Mammary epithelial cell (primary cell): ENCODE measurements at regions of chr14 and their contacts with region 1.

Region 1: DNA sequence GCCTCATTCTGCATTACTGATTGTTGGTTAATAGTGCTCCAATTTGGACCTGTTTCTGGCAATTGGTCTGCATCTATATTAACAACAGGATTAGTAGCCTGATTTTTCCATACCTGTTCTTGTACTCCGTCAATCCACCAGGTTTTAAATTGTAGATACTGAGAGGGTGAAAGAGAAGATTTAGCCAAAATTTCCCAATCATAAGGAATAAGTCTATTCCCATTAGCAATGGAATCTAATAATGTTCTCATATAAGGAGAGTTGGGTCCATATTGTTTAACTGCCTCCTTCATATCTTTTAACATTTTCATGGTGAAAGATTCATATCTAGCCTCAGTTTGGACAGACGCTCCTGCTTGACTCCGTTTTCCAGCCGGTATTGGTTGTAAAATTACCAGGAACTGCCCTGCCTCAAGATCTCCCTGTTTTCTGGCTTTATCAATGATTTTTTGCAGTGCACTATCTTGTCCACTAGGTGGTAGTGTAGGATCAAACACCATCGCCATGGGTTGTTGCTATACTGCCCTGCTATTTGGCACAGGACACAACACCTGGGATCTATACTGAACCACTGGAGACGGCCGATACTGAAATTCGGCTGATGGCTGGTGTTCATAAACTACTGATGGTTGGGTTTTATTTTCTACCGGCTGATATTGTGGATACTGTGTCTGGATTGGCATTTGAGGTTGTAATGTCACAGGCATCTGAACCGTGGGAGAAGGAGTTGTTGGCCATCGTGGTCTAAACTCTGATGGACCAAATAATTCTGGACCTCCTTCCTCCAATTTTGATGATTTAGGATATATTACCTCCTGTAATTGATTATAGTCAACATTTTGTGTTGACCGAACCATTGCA is 25.2 kb downstream of the DHRS4L2 start:
- DNase-seq: peak; percentile 65
- H3K4me3 ChIP-seq: no peak overlapping the region
- H3K27ac ChIP-seq: no peak overlapping the region
- H3K4me1 ChIP-seq: no peaks in the 10 kb centered on the region
- H3K27me3 ChIP-seq: no peaks in the 10 kb centered on the region
- CTCF ChIP-seq: peak; percentile 86 to 90

Region 2: DNA sequence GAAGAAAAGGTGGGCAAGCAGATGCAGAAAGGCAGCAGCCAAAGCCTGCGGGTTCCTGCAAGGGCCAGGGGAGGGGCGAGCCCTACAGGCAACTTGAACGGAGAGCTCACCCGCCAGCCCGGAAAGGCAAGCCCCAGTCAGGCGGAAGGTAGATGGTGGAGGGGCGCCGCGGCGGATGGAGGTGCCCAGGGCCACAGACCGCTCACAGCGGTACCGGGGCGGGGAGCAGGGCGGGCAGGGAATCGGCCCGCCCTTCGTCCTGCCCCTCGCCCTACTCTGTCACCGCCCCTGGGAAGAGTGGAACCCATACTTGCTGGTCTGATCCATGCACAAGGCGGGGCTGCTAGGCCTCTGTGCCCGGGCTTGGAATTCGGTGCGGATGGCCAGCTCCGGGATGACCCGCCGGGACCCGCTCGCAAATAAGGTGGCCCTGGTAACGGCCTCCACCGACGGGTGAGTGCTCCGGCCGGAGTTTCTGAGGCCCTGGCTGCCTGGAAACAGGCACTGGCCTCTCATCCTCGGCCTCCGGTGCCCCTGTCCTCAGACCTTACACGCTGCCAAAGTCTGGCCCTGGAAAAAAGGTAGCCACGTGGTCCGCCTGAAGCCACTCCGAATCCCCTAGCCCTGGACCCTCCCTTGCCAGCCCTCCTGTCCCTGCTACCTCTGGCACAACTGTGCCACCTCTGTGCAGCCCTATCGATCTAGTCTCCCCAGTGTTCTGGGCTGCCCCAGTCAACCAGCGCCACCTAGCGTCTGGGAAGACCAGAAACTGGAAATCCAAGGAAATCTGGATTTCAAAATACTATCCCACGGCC is 60.2 kb before region 1 on chr14 and contains the start of gene DHRS4:
- CTCF ChIA-PET with region 1: no interaction called
- dilution Hi-C with region 1: no loop called
- in situ Hi-C with region 1: no loop called
- intact Hi-C with region 1: loop called (anchors 10 kb)
- DNase-seq: peak; percentile 86
- H3K4me3 ChIP-seq: peak within 1 kb of the TSS; percentile 54 to 82 (median 68)
- H3K27ac ChIP-seq: peak within 1 kb of the TSS; percentile 52
- H3K4me1 ChIP-seq: no peaks in the 10 kb centered on the region
- H3K27me3 ChIP-seq: no peaks in the 10 kb centered on the region
- CTCF ChIP-seq: peak; percentile 75 to 93
- total RNA-seq, gene DHRS4: 25.0 to 30.9 TPM

Region 3: GRCh38 chr14:24036169-24036962 is 22.5 kb after region 1 on chr14:
- CTCF ChIA-PET with region 1: no interaction called
- dilution Hi-C with region 1: no loop called
- in situ Hi-C with region 1: no loop called
- intact Hi-C with region 1: loop called (anchors 1 kb)
- DNase-seq: peak; percentile 70
- H3K4me3 ChIP-seq: peak overlapping the region; percentile 64
- H3K27ac ChIP-seq: peak overlapping the region; percentile 34
- H3K4me1 ChIP-seq: no peaks in the 10 kb centered on the region
- H3K27me3 ChIP-seq: no peaks in the 10 kb centered on the region
- CTCF ChIP-seq: peak; percentile 68 to 86

Region 4: GRCh38 chr14:24058260-24058950 is 44.5 kb after region 1 on chr14:
- CTCF ChIA-PET with region 1: no interaction called
- dilution Hi-C with region 1: no loop called
- in situ Hi-C with region 1: no loop called
- intact Hi-C with region 1: loop called (anchors 1 kb)
- DNase-seq: peak; percentile 50
- H3K4me3 ChIP-seq: no peak overlapping the region
- H3K27ac ChIP-seq: no peak overlapping the region
- H3K4me1 ChIP-seq: no peaks in the 10 kb centered on the region
- H3K27me3 ChIP-seq: peaks cover 7% of the 10 kb centered on the region
- CTCF ChIP-seq: peak; percentile 57 to 62

Region 5: GRCh38 chr14:24071144-24071697 is 57.3 kb after region 1 on chr14 and contains the start of gene CPNE6:
- CTCF ChIA-PET with region 1: no interaction called
- dilution Hi-C with region 1: no loop called
- in situ Hi-C with region 1: no loop called
- intact Hi-C with region 1: no loop called
- DNase-seq: no peak
- H3K4me3 ChIP-seq: no peak within 1 kb of the TSS
- H3K27ac ChIP-seq: no peak within 1 kb of the TSS
- H3K4me1 ChIP-seq: no peaks in the 10 kb centered on the region
- H3K27me3 ChIP-seq: peaks cover 4% of the 10 kb centered on the region
- CTCF ChIP-seq: no peak
- total RNA-seq, gene CPNE6: not detected

Region 6: DNA sequence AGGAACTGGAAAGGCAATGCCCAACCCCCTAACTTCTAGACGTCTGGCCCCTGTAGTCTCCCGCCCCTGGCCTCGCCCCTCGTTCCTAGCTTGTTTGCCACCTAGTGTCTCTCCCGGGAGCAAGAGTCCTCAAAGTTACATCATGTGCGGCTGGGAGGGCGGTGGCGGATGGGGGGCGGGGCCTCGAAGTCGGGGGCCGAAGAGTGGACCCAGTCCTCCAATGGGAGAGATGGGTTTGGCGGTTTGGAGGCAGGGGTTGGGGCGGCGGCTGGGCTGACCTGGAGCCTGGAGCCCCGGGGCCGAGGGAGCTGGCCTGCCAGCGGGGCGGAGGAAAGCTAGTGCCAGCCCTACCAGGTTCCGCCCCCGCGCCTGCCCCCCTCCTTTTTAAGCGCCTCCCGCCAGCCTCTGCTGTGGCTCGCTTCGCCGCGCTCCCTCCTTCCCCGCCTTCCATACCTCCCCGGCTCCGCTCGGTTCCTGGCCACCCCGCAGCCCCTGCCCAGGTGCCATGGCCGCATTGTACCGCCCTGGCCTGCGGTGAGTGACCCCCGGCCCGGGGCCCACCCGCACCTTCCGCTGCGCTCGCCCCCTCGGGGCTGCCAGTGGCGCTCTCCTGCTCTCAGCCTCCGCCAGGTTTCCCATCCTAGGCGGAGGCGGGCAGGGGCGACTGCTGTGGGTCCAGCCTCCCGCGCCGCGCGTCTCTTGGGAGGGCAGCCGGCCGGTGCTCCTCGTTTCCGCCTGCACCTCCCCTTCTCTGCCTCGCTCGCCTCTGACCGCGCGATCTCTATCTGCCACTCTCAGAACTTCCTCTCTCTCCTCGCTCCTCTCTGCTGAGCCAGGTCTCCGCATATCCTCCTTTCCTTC is 80.2 kb after region 1 on chr14 and contains the start of gene PCK2:
- CTCF ChIA-PET with region 1: no interaction called
- dilution Hi-C with region 1: no loop called
- in situ Hi-C with region 1: loop called in 1 of 2 experiments (anchors 5 kb)
- intact Hi-C with region 1: no loop called
- DNase-seq: peak; percentile 88
- H3K4me3 ChIP-seq: peak within 1 kb of the TSS; percentile 67 to 86 (median 77)
- H3K27ac ChIP-seq: peak within 1 kb of the TSS; percentile 54
- H3K4me1 ChIP-seq: peaks cover 12% of the 10 kb centered on the region
- H3K27me3 ChIP-seq: no peaks in the 10 kb centered on the region
- CTCF ChIP-seq: peak in 1 of 2 donors; percentile 6
- total RNA-seq, gene PCK2: 55.5 to 129 TPM

Region 7: DNA sequence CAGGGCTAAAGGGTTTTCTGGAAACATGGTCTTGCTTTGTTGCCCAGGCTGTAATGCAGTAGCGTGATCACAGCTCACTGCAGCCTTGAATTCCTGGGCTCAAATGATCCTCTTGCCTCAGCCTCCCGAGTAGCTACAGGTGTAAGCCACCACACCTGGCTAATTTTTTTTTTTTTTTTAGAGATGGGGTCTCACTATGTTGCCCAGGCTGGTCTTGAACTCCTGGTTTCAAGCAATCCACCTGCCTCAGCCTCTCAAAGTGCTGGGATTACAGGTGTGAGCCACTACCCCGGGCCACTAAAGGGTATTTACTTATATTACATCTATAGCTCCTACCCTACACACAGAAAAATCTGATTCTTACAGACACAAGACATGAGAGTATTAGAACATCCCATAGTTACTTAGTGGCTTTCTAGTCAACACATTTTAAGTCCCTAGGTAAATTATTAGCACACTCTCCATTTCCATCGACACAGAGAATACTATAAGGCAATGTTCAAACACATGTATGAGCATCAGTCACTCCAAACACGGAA is 94.5 kb after region 1 on chr14:
- CTCF ChIA-PET with region 1: no interaction called
- dilution Hi-C with region 1: no loop called
- in situ Hi-C with region 1: no loop called
- intact Hi-C with region 1: loop called (anchors 1 kb)
- DNase-seq: no peak
- H3K4me3 ChIP-seq: no peak overlapping the region
- H3K27ac ChIP-seq: no peak overlapping the region
- H3K4me1 ChIP-seq: peaks cover 21% of the 10 kb centered on the region
- H3K27me3 ChIP-seq: no peaks in the 10 kb centered on the region
- CTCF ChIP-seq: no peak

Region 8: GRCh38 chr14:24160850-24161804 is 147.2 kb after region 1 on chr14 and contains the start of gene IRF9:
- CTCF ChIA-PET with region 1: no interaction called
- dilution Hi-C with region 1: no loop called
- in situ Hi-C with region 1: loop called in 1 of 2 experiments (anchors 5 kb)
- intact Hi-C with region 1: loop called (anchors 1 kb)
- DNase-seq: peak; percentile 83
- H3K4me3 ChIP-seq: peak within 1 kb of the TSS; percentile 58 to 67 (median 58)
- H3K27ac ChIP-seq: peak within 1 kb of the TSS; percentile 46
- H3K4me1 ChIP-seq: peaks cover 9% of the 10 kb centered on the region
- H3K27me3 ChIP-seq: no peaks in the 10 kb centered on the region
- CTCF ChIP-seq: peak; percentile 93 to 98
- total RNA-seq, gene IRF9: 43.0 to 45.7 TPM

Region 9: GRCh38 chr14:24171422-24172260 is 157.8 kb after region 1 on chr14 and contains the start of gene REC8:
- CTCF ChIA-PET with region 1: no interaction called
- dilution Hi-C with region 1: no loop called
- in situ Hi-C with region 1: no loop called
- intact Hi-C with region 1: no loop called
- DNase-seq: no peak
- H3K4me3 ChIP-seq: no peak within 1 kb of the TSS
- H3K27ac ChIP-seq: no peak within 1 kb of the TSS
- H3K4me1 ChIP-seq: no peaks in the 10 kb centered on the region
- H3K27me3 ChIP-seq: no peaks in the 10 kb centered on the region
- CTCF ChIP-seq: no peak
- total RNA-seq, gene REC8: 2.7 to 15.0 TPM